HepG2 (cell line): ENCODE measurements at regions of chr9 and their contacts with region 1.

Region 1: DNA sequence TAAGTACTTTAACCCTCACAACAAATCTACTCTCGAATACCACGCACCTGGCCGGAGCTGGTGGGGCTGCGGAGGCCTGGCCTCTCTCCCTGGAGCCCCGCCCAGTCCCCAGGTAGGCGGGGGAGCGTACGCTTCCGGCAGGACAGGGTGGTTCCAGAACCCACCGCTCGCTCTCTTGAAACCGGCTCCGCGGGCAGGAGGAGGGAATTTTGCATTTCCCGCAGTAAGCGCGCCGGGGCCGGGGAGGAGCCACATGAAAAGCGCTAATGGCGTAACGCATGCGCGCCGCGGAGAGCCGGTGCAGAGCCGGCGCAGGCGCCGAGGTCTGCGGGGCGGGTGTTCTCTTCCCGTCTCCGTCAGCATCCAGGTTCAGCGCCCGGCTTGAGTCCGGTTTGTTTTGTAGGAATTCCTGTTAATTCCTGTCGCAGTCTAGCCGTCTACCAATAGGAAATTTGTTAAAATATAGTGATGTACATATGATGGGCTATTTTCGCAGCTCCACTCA is 20.8 kb downstream of the CAVIN4 start:
- DNase-seq: peak; percentile 69
- ATAC-seq: peak; percentile 82
- H3K4me3 ChIP-seq: peak overlapping the region; percentile 61 to 73 (median 62)
- H3K27ac ChIP-seq: no peak overlapping the region
- H3K4me1 ChIP-seq: peaks cover 24% of the 10 kb centered on the region
- H3K27me3 ChIP-seq: no peaks in the 10 kb centered on the region
- CTCF ChIP-seq: no peak
- EP300 ChIP-seq: no peak
- POLR2A ChIP-seq: peak in 1 of 2 experiments; percentile 53; a peak in 1 of 4 replicates
- RAD21 ChIP-seq: no peak

Region 2: DNA sequence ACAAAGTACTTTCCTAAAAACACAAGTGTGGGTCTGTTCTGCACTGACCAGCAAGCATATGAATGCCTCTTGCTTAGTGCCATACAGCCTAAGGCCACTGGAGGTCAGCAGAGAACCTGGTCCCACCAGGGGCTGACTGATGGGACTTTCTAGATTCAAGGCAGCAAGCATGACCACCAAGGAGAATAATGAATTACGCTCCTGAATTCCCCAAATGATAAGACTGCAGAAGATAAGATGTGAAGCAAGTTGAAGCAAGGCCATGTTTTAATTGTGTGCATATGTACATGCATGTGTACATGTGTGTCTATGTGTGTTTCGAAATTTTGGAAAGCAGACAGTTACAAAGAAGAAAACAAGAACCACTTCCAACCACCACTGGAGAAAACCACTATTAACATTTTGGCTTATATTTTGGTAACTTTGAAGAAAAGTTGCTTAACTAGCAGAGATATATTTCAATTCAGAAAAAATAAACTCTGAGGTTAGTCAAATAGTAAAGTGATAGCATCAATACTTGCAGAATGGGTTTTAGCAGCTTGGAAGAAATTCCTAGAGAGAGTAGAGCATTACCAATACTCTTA is 570.4 kb before region 1 on chr9:
- CTCF ChIA-PET with region 1: interaction called, 7 read pairs
- POLR2A ChIA-PET with region 1: no interaction called
- in situ Hi-C with region 1: loop called (anchors 25 kb)
- intact Hi-C with region 1: no loop called
- DNase-seq: peak; percentile 61
- ATAC-seq: peak; percentile 99
- H3K4me3 ChIP-seq: no peak overlapping the region
- H3K27ac ChIP-seq: no peak overlapping the region
- H3K4me1 ChIP-seq: no peaks in the 10 kb centered on the region
- H3K27me3 ChIP-seq: no peaks in the 10 kb centered on the region
- CTCF ChIP-seq: peak; percentile 90
- EP300 ChIP-seq: no peak
- POLR2A ChIP-seq: no peak
- RAD21 ChIP-seq: peak; percentile 77

Region 3: GRCh38 chr9:100322954-100323536 is 275.6 kb before region 1 on chr9:
- CTCF ChIA-PET with region 1: no interaction called
- POLR2A ChIA-PET with region 1: no interaction called
- in situ Hi-C with region 1: no loop called
- intact Hi-C with region 1: loop called (anchors 5 kb)
- DNase-seq: peak; percentile 26
- ATAC-seq: peak; percentile 43; the same call in 1 of the 3 replicates
- H3K4me3 ChIP-seq: no peak overlapping the region
- H3K27ac ChIP-seq: no peak overlapping the region
- H3K4me1 ChIP-seq: no peaks in the 10 kb centered on the region
- H3K27me3 ChIP-seq: no peaks in the 10 kb centered on the region
- CTCF ChIP-seq: peak; percentile 65
- EP300 ChIP-seq: no peak
- POLR2A ChIP-seq: no peak
- RAD21 ChIP-seq: no peak

Region 4: DNA sequence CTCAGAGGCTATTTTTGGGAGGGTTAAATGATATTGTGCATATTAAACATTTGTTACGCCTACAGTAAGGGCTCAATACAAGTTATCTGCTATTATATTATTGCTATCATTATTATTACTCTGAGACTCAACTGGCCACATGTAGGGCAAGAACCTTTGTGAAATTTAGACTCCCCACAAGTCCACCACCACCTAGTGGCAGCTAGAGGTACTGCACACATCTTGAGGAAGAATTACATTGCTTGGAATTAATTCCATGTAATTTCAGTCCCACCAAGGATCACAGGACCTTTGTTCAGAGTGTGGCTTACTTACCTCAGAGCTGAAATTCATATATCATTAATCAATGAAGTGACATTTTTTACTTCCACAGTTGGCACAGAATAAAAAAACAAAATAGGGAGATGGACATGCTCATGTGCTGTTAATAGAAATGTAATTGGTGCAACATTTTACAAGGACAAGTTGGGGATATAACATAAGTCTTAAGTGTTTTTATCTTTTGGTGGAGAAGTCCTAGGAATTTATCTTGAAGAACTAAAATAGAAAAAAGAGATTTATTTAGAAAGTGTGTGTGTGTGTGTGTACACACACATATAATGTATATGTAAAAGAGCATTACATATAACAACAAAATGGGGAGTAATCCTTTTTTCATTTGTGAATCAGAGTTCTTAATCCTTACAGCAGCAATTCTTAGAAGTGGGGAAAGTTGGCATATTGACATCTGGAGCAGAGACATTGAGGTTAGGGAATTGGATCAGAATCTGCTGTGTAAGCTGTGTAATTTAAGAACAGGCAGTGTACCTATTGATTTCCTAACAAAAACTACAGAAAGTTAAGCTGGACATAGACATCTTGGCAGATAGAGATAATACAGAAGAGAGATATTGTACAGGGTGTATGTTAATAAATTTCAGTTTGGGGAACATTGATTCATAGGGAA is 160.6 kb before region 1 on chr9:
- CTCF ChIA-PET with region 1: no interaction called
- POLR2A ChIA-PET with region 1: no interaction called
- in situ Hi-C with region 1: loop called (anchors 5 kb)
- intact Hi-C with region 1: loop called (anchors 2 kb)
- DNase-seq: peak; percentile 70
- ATAC-seq: peak; percentile 56; the same call in 2 of the 3 replicates
- H3K4me3 ChIP-seq: no peak overlapping the region
- H3K27ac ChIP-seq: no peak overlapping the region
- H3K4me1 ChIP-seq: peaks cover 9% of the 10 kb centered on the region; the same call in 1 of the 2 replicates
- H3K27me3 ChIP-seq: no peaks in the 10 kb centered on the region
- CTCF ChIP-seq: peak; percentile 78
- EP300 ChIP-seq: no peak
- POLR2A ChIP-seq: no peak
- RAD21 ChIP-seq: no peak

Region 5: GRCh38 chr9:100700689-100701318 is 102.1 kb after region 1 on chr9:
- CTCF ChIA-PET with region 1: no interaction called
- POLR2A ChIA-PET with region 1: no interaction called
- in situ Hi-C with region 1: no loop called
- intact Hi-C with region 1: loop called (anchors 5 kb)
- DNase-seq: peak; percentile 27
- ATAC-seq: peak; percentile 75
- H3K4me3 ChIP-seq: no peak overlapping the region
- H3K27ac ChIP-seq: no peak overlapping the region
- H3K4me1 ChIP-seq: peaks cover 11% of the 10 kb centered on the region; the same call in 1 of the 2 replicates
- H3K27me3 ChIP-seq: no peaks in the 10 kb centered on the region
- CTCF ChIP-seq: peak; percentile 57
- EP300 ChIP-seq: no peak
- POLR2A ChIP-seq: no peak
- RAD21 ChIP-seq: no peak

Region 6: GRCh38 chr9:101387871-101388506 is 789.3 kb after region 1 on chr9:
- CTCF ChIA-PET with region 1: no interaction called
- POLR2A ChIA-PET with region 1: no interaction called
- in situ Hi-C with region 1: no loop called
- intact Hi-C with region 1: loop called (anchors 2 kb)
- DNase-seq: peak; percentile 86
- ATAC-seq: peak; percentile 97
- H3K4me3 ChIP-seq: no peak overlapping the region
- H3K27ac ChIP-seq: peak overlapping the region; percentile 41
- H3K4me1 ChIP-seq: peaks cover 81% of the 10 kb centered on the region
- H3K27me3 ChIP-seq: no peaks in the 10 kb centered on the region
- CTCF ChIP-seq: peak; percentile 88
- EP300 ChIP-seq: peak in 1 of 2 experiments; percentile 58; a peak in 1 of 4 replicates
- POLR2A ChIP-seq: no peak
- RAD21 ChIP-seq: peak; percentile 81